OCI-LY7 (cell line): ENCODE measurements at regions of chr11 and their contacts with region 1.

Region 1: GRCh38 chr11:11931461-11932055 is 76.9 kb downstream of the DKK3 start:
- DNase-seq: peak; percentile 38
- H3K4me3 ChIP-seq: no peak overlapping the region
- H3K27ac ChIP-seq: no peak overlapping the region
- H3K4me1 ChIP-seq: peaks cover 4% of the 10 kb centered on the region
- CTCF ChIP-seq: peak; percentile 82

Region 2: GRCh38 chr11:11493698-11494097 is 437.9 kb before region 1 on chr11:
- CTCF ChIA-PET with region 1: no interaction called
- POLR2A ChIA-PET with region 1: no interaction called
- intact Hi-C with region 1: no loop called
- DNase-seq: no peak
- H3K4me3 ChIP-seq: no peak overlapping the region
- H3K27ac ChIP-seq: no peak overlapping the region
- H3K4me1 ChIP-seq: no peaks in the 10 kb centered on the region
- CTCF ChIP-seq: no peak

Region 3: DNA sequence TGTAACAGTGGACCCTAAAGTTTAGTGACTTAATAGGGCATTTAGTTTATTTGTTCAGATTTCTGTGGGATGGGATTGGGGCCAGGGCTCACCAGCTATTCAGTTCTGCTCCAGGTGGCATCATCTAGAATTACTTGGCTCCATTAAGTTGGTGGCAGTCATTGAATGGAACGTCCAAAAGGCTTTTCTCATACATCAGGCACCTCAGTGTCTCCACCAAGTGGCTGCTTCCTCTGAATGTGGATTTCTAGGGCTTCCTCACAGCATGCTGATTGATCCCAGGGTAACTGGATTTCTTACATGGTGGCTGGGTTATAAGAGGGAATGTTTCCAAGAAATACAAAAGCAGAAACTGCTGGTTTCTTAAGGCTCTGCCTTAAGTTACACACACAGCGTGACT is 55.1 kb before region 1 on chr11:
- CTCF ChIA-PET with region 1: no interaction called
- POLR2A ChIA-PET with region 1: no interaction called
- intact Hi-C with region 1: loop called (anchors 10 kb)
- DNase-seq: no peak
- H3K4me3 ChIP-seq: no peak overlapping the region
- H3K27ac ChIP-seq: no peak overlapping the region
- H3K4me1 ChIP-seq: peaks cover 8% of the 10 kb centered on the region
- CTCF ChIP-seq: peak; percentile 64